MCF 10A (cell line): ENCODE measurements at regions of chr5 and their contacts with region 1.

Region 1: DNA sequence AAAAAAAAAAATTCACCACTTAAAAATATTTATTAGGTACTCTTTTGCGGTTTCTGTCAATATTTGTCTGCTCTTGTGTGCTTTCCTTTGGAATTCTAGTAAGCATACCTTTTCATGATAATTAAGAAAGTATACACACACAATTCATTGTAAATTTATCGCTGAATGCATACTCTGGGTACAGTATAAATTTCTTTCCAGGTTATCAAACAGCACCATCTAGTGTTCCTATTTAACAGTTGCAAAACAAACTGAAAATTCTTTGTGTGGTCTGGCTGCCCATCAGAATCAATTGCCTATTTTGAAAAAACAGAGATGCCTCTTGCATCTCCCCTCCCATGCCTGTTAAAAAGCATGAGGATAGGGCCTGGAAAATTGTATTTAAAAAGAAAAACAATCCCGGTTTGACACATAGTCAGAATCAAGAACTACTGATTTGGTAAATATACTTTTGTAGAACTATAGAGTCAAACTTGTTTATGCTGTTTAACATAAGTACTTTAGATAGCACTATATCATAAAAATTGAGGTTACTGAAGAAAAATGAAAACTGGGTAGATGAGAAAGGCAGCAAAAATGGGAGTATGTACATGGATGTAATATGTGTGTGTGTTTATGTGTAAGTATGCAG is 16.2 kb downstream of the PGGT1B start:
- DNase-seq: peak; percentile 64
- H3K4me3 Mint-ChIP-seq: no peak overlapping the region
- H3K27ac Mint-ChIP-seq: no peak overlapping the region
- H3K4me1 Mint-ChIP-seq: peaks cover 18% of the 10 kb centered on the region
- H3K27me3 Mint-ChIP-seq: no peaks in the 10 kb centered on the region
- CTCF ChIP-seq: peak; percentile 73

Region 2: DNA sequence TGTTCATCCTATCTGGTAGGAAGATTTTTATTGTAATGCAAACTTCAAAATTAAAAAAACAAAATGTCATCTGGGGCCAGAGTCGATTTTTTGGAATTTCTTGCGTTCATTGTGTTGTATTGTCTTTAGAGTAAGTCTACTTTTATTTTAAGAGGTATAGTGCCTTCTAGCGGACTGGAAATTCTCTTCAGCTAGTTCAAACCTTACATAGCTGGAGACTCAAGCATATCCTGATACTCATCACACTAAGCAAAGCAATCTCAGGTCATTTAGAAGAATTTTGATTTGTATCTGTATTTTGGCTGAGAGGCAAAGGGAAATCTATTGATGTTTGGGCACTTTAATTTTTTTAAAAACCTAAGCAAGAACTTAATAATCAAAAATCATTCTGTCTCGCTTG is 443.1 kb before region 1 on chr5:
- CTCF ChIA-PET with region 1: no interaction called
- POLR2A ChIA-PET with region 1: no interaction called
- intact Hi-C with region 1: loop called (anchors 5 kb)
- DNase-seq: peak; percentile 13
- H3K4me3 Mint-ChIP-seq: no peak overlapping the region
- H3K27ac Mint-ChIP-seq: no peak overlapping the region
- H3K4me1 Mint-ChIP-seq: no peaks in the 10 kb centered on the region
- H3K27me3 Mint-ChIP-seq: peaks cover 11% of the 10 kb centered on the region
- CTCF ChIP-seq: peak; percentile 10

Region 3: GRCh38 chr5:115098041-115098702 is 148.3 kb before region 1 on chr5:
- CTCF ChIA-PET with region 1: interaction called, 50 read pairs
- POLR2A ChIA-PET with region 1: no interaction called
- intact Hi-C with region 1: loop called (anchors 1 kb)
- DNase-seq: peak; percentile 62
- H3K4me3 Mint-ChIP-seq: no peak overlapping the region
- H3K27ac Mint-ChIP-seq: no peak overlapping the region
- H3K4me1 Mint-ChIP-seq: no peaks in the 10 kb centered on the region
- H3K27me3 Mint-ChIP-seq: no peaks in the 10 kb centered on the region
- CTCF ChIP-seq: peak; percentile 66

Region 4: GRCh38 chr5:115169487-115170133 is 76.9 kb before region 1 on chr5 and contains the start of gene TRIM36:
- CTCF ChIA-PET with region 1: interaction called, 3 read pairs
- POLR2A ChIA-PET with region 1: no interaction called
- intact Hi-C with region 1: loop called (anchors 2 kb)
- DNase-seq: peak; percentile 94
- H3K4me3 Mint-ChIP-seq: peak within 1 kb of the TSS; percentile 84
- H3K27ac Mint-ChIP-seq: peak within 1 kb of the TSS; percentile 35
- H3K4me1 Mint-ChIP-seq: peaks cover 6% of the 10 kb centered on the region
- H3K27me3 Mint-ChIP-seq: no peaks in the 10 kb centered on the region
- CTCF ChIP-seq: peak; percentile 8
- total RNA-seq, gene TRIM36: 4.9 and 7.1 TPM in 2 replicates

Region 5: DNA sequence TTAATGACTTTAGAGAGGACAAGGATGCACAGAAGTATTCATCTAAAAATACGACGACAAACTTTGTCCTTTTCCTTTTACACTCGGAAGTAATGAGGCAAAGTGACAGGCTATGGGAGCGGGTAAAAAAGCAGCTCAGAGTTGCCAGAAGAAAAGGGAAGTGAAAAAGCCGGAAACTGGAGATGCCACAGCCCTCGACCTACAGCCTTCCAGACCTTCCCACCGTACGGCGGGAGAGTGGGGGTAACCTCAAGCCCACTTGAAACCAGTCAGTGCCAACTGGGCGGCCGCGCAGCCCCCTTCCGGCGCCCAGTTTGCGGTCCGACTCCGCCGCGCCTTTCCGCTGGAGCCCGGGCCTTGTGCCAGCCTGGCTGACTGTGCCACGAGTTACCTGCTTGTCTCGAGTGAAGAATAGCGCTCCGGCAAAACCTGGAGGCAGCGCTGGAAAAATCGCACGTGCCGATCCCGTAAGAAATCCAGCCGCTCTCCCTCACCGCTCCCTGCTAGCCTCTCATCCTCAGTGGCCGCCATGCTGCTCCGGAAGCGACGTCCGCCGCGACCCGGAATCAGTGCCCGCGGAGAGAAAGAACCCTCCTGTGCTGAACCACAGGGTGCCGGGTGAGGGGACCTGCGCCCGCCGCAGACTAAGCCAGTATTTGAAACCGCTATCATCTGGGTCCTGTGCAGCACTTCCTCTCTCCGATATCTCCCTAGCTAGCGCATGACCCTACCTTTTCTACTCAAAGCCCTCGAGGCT is 16.0 kb after region 1 on chr5 and contains the start of gene PGGT1B:
- CTCF ChIA-PET with region 1: interaction called, 10 read pairs
- POLR2A ChIA-PET with region 1: interaction called, 3 read pairs
- intact Hi-C with region 1: no loop called
- DNase-seq: peak; percentile 66
- H3K4me3 Mint-ChIP-seq: peak within 1 kb of the TSS; percentile 83
- H3K27ac Mint-ChIP-seq: peak within 1 kb of the TSS; percentile 97
- H3K4me1 Mint-ChIP-seq: peaks cover 29% of the 10 kb centered on the region
- H3K27me3 Mint-ChIP-seq: no peaks in the 10 kb centered on the region
- CTCF ChIP-seq: no peak
- total RNA-seq, gene PGGT1B: 43.9 and 48.5 TPM in 2 replicates